ENCODE measurements at regions of chr19 and their contacts with region 1.

Region 1: GRCh38 chr19:33047406-33047805 is 17.3 kb downstream of the RHPN2 start:
- H3K4me3 ChIP-seq: no peak overlapping the region
- H3K27ac ChIP-seq: no peak overlapping the region
- H3K4me1 ChIP-seq: peaks cover 37% of the 10 kb centered on the region
- CTCF ChIP-seq: no peak

Region 2: GRCh38 chr19:32691291-32691951 is 356.0 kb before region 1 on chr19 and contains the start of gene NUDT19:
- CTCF ChIA-PET with region 1: no interaction called
- POLR2A ChIA-PET with region 1: interaction called, 11 read pairs
- H3K4me3 ChIP-seq: peak within 1 kb of the TSS; percentile 52
- H3K27ac ChIP-seq: peak within 1 kb of the TSS; percentile 96
- H3K4me1 ChIP-seq: peaks cover 23% of the 10 kb centered on the region
- CTCF ChIP-seq: peak; percentile 56; the same call in 1 of the 2 replicates

Region 3: DNA sequence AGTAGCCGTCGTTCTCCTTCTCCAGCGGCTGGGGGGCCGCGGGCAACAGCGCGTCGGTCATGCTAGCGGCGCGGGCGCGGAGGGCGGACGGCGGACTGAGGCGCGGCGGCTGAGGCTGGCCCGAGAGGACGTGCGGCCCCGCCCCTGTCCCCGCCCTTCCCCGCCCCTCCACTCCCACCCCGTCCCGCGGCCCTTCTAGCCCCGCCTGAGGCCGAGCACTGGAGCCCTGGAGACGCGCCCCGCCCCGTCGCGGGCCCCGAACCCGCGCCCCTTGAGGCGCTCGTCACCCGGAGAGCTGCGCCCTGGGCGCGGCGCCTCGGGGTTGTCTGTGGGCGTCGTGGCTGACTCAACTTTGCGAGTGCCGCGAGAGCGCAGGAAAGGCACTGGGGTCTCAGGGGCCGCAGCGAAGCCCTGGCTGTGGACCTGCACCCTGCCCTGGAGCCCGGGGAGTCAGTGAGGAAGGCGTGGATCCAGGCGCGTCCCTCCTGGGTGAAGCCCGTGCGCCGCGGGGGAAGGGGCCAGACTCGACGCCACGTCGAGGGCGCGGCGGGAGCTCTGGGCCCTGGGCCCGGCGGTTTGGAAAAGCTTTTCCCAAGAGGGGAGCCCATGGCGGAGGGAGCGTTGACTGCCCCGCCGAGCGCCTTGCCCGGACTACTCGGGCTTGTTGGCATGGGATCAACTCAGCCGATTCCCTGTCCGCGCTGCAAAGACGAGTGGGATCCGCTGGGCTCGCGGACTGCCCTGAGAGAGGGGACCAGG is 17.6 kb after region 1 on chr19 and contains the start of gene RHPN2:
- CTCF ChIA-PET with region 1: interaction called, 9 read pairs
- POLR2A ChIA-PET with region 1: interaction called, 26 read pairs
- H3K4me3 ChIP-seq: peak within 1 kb of the TSS; percentile 45
- H3K27ac ChIP-seq: peak within 1 kb of the TSS; percentile 75; the same call in 1 of the 2 replicates
- H3K4me1 ChIP-seq: peaks cover 21% of the 10 kb centered on the region
- CTCF ChIP-seq: peak; percentile 67

Region 4: DNA sequence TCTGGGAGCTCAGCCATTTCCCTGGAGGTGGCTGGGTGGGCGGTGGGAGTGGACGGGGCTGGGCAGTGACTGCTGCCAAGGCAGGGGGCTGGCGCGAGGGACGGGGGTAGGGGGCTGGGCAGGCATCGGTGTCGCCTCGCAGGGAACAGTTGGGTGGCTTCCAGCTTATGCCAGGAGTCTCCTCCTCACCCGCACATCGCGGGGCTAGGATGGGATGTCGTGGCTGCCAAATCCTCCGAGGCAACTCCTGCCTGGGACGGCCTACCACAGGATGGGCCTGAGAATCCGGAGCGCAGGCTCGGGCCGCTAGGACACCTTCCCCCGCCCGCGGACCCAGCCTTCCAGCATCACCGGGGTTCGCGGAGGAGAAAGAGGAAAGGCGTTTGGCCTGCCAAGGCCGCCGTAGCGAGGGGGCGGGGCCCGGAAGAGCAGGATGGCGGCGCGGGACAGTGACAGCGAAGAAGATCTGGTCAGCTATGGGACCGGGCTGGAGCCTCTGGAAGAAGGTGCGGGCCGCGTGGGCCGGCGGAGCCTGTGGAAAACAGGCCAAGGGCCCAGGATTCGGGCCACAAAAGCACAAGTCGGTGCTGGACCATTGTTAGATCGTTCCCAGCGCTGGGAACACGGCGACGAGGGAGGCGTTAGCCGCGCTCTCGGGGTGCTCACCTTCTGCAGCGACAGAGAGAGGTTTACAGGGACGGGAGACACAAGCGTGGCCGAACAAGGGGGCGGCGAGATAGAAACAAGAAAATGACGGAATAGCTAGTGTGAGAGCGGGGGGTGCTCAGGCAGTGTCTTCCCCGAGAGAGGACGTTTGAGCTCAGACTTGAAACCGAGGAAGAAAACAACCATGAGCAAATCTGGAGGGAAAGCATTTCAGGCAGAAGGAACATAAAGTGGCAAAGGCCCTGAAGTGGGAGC is 33.6 kb after region 1 on chr19 and contains the start of gene GPATCH1:
- CTCF ChIA-PET with region 1: no interaction called
- POLR2A ChIA-PET with region 1: interaction called, 11 read pairs
- H3K4me3 ChIP-seq: peak within 1 kb of the TSS; percentile 66
- H3K27ac ChIP-seq: peak within 1 kb of the TSS; percentile 89
- H3K4me1 ChIP-seq: peaks cover 26% of the 10 kb centered on the region
- CTCF ChIP-seq: peak; percentile 82

Region 5: DNA sequence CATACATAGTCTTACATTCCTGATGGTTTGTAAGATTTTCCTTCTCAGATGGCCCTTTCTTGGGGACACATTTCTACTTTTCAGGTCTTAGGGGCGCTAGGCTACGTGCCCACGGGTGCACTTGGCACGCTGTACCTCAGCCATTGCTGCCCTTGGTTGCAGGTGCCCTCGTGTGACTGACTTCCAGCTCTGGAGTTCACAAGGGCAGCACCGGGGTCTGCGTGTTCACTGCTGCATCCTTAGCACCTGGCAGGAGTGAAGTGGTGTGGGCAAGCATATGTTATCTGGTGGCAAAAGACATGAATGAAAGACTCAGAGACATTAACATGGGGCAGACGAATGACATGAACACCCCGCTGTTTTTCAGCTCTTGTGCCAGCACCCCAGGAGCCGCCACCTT is 71.2 kb after region 1 on chr19:
- CTCF ChIA-PET with region 1: interaction called, 11 read pairs
- POLR2A ChIA-PET with region 1: no interaction called
- H3K4me3 ChIP-seq: no peak overlapping the region
- H3K27ac ChIP-seq: no peak overlapping the region
- H3K4me1 ChIP-seq: no peaks in the 10 kb centered on the region
- CTCF ChIP-seq: no peak

Region 6: GRCh38 chr19:33125929-33126388 is 78.6 kb after region 1 on chr19:
- CTCF ChIA-PET with region 1: interaction called, 13 read pairs
- POLR2A ChIA-PET with region 1: no interaction called
- H3K4me3 ChIP-seq: no peak overlapping the region
- H3K27ac ChIP-seq: 0 out of 2 replicates have a peak overlapping the region, but pooled peaks have one; percentile 11
- H3K4me1 ChIP-seq: peaks cover 4% of the 10 kb centered on the region
- CTCF ChIP-seq: peak; percentile 86

Measured in HEK293 (cell line).